ENCODE measurements at regions of chr12 and their contacts with region 1.

Region 1: DNA sequence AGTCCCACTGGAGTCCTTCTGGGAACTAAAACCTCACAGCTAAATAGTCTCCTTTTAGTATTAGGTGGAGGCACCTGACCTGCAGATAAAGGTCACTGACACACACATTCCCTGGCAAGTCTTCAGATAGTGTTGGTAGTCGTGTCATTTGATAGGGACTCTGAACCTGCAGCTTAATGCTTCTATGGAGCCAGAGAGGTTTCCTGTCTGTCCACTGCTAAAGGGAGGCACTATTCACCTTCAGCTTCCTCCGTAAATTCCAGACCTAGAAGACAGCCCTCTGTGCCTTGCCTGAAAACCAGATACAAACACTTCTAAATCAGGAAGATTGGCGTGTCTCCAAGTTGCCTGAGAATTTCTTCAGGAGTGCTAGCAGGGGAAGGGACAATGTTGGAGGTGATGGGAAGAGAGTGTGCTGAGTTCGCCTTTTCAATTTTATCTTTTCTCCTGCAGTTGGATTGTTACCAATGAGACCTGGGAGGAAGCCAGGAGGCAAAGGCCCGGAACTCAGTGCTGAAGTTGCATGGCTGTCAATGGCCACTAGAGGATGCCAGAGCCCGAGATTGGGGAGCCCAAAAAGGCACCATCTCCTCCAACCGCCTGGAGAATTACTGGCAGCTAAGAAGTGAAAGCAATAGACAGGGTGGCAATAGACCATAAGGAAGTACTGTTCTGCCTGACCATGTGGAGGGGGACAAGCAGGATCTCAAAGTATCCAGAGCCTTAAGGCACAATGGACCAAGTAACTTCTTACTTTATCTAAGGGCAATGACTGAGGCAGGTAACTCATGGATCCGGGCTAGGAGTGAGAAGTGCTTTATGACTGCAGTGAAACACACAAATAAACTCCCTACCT is 81.6 kb upstream of the SCAF11 start:
- DNase-seq: peak; percentile 78
- ATAC-seq: peak; percentile 99
- H3K4me3 Mint-ChIP-seq: no peak overlapping the region
- H3K27ac Mint-ChIP-seq: no peak overlapping the region
- H3K4me1 Mint-ChIP-seq: peaks cover 4% of the 10 kb centered on the region
- H3K27me3 Mint-ChIP-seq: no peaks in the 10 kb centered on the region; the same call in 1 of the 2 replicates
- CTCF ChIP-seq: peak; percentile 87

Region 2: GRCh38 chr12:46027172-46027571 is 44.8 kb before region 1 on chr12:
- CTCF ChIA-PET with region 1: no interaction called
- POLR2A ChIA-PET with region 1: no interaction called
- DNase-seq: no peak
- ATAC-seq: no peak
- H3K4me3 Mint-ChIP-seq: no peak overlapping the region
- H3K27ac Mint-ChIP-seq: no peak overlapping the region
- H3K4me1 Mint-ChIP-seq: peaks cover 1% of the 10 kb centered on the region
- H3K27me3 Mint-ChIP-seq: peaks cover 7% of the 10 kb centered on the region; the same call in 1 of the 2 replicates
- CTCF ChIP-seq: no peak

Region 3: DNA sequence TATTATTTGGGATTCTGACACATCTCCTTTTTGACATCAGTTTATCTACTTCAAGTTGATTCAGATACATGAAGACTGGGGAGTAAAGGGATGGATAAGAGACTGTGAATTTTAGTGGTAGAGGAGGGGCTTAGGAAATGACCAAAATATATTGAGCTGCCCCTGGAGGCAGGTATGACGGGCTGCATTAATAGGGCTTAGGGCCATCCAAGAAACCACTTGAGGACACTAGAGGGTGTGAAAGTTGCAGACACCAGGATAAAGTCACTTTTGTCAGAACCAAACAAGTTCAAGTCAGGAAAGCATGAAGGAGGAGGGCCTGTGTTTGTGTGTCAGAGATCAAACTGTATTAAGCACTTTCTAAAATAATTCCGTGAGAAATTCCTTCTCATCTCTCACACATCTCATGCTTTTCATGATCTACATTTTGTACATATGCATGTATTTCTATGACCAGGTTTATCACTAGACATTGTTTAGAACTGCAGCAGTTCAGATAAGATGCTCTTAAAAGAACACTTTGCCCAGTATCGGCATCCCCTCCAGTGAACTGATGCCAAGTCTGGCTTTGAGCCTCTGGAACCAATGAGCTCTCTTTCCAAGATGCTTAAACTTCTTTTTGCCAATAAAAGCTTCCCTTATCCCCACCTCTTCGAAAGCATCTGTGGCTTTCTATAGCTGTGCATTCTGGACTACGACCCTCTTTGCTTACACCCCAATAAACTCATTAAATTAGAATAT is 59.9 kb after region 1 on chr12:
- CTCF ChIA-PET with region 1: interaction called, 13 read pairs
- POLR2A ChIA-PET with region 1: no interaction called
- DNase-seq: no peak
- ATAC-seq: peak; percentile 100
- H3K4me3 Mint-ChIP-seq: no peak overlapping the region
- H3K27ac Mint-ChIP-seq: no peak overlapping the region
- H3K4me1 Mint-ChIP-seq: no peaks in the 10 kb centered on the region
- H3K27me3 Mint-ChIP-seq: no peaks in the 10 kb centered on the region
- CTCF ChIP-seq: no peak